WTC11 (cell line): ENCODE measurements at regions of chr1 and their contacts with region 1.

Region 1: GRCh38 chr1:24201941-24202440 is 14.9 kb upstream of the IFNLR1 start:
- DNase-seq: peak; percentile 90
- ATAC-seq: peak; percentile 75
- H3K4me3 Mint-ChIP-seq: no peak overlapping the region
- H3K27ac Mint-ChIP-seq: no peak overlapping the region
- H3K4me1 Mint-ChIP-seq: 0 out of 2 replicates have a peak, but pooled peaks cover 2% of the 10 kb centered on the region
- H3K27me3 Mint-ChIP-seq: no peaks in the 10 kb centered on the region
- CTCF ChIP-seq: peak; percentile 79

Region 2: GRCh38 chr1:23484253-23485001 is 717.6 kb before region 1 on chr1:
- CTCF ChIA-PET with region 1: no interaction called
- POLR2A ChIA-PET with region 1: no interaction called
- DNase-seq: peak; percentile 97
- ATAC-seq: peak; percentile 87
- H3K4me3 Mint-ChIP-seq: peak overlapping the region; percentile 82
- H3K27ac Mint-ChIP-seq: peak overlapping the region; percentile 96
- H3K4me1 Mint-ChIP-seq: peaks cover 44% of the 10 kb centered on the region
- H3K27me3 Mint-ChIP-seq: peaks cover 13% of the 10 kb centered on the region
- CTCF ChIP-seq: no peak

Region 3: GRCh38 chr1:24047101-24047459 is 154.9 kb before region 1 on chr1:
- CTCF ChIA-PET with region 1: no interaction called
- POLR2A ChIA-PET with region 1: no interaction called
- DNase-seq: no peak
- ATAC-seq: no peak
- H3K4me3 Mint-ChIP-seq: no peak overlapping the region
- H3K27ac Mint-ChIP-seq: 0 out of 2 replicates have a peak overlapping the region, but pooled peaks have one; percentile 60
- H3K4me1 Mint-ChIP-seq: no peaks in the 10 kb centered on the region
- H3K27me3 Mint-ChIP-seq: no peaks in the 10 kb centered on the region
- CTCF ChIP-seq: no peak

Region 4: GRCh38 chr1:24150234-24151174 is 51.5 kb before region 1 on chr1:
- CTCF ChIA-PET with region 1: interaction called, 39 read pairs
- POLR2A ChIA-PET with region 1: interaction called, 7 read pairs
- DNase-seq: peak; percentile 99
- ATAC-seq: peak; percentile 84
- H3K4me3 Mint-ChIP-seq: peak overlapping the region; percentile 63
- H3K27ac Mint-ChIP-seq: peak overlapping the region; percentile 99
- H3K4me1 Mint-ChIP-seq: peaks cover 46% of the 10 kb centered on the region
- H3K27me3 Mint-ChIP-seq: no peaks in the 10 kb centered on the region; the same call in 1 of the 2 replicates
- CTCF ChIP-seq: peak; percentile 88

Region 5: GRCh38 chr1:24253569-24253968 is 51.6 kb after region 1 on chr1:
- CTCF ChIA-PET with region 1: interaction called, 10 read pairs
- POLR2A ChIA-PET with region 1: no interaction called
- DNase-seq: peak; percentile 28
- ATAC-seq: peak; percentile 90
- H3K4me3 Mint-ChIP-seq: no peak overlapping the region
- H3K27ac Mint-ChIP-seq: no peak overlapping the region
- H3K4me1 Mint-ChIP-seq: no peaks in the 10 kb centered on the region
- H3K27me3 Mint-ChIP-seq: no peaks in the 10 kb centered on the region
- CTCF ChIP-seq: no peak

Region 6: GRCh38 chr1:24308365-24309015 is 106.5 kb after region 1 on chr1:
- CTCF ChIA-PET with region 1: interaction called, 45 read pairs
- POLR2A ChIA-PET with region 1: no interaction called
- DNase-seq: peak; percentile 49
- ATAC-seq: peak; percentile 86
- H3K4me3 Mint-ChIP-seq: no peak overlapping the region
- H3K27ac Mint-ChIP-seq: 0 out of 2 replicates have a peak overlapping the region, but pooled peaks have one; percentile 29
- H3K4me1 Mint-ChIP-seq: peaks cover 64% of the 10 kb centered on the region
- H3K27me3 Mint-ChIP-seq: no peaks in the 10 kb centered on the region
- CTCF ChIP-seq: no peak

Region 7: GRCh38 chr1:24341260-24341659 is 139.3 kb after region 1 on chr1:
- CTCF ChIA-PET with region 1: interaction called, 12 read pairs
- POLR2A ChIA-PET with region 1: no interaction called
- DNase-seq: no peak
- ATAC-seq: peak; percentile 71
- H3K4me3 Mint-ChIP-seq: no peak overlapping the region
- H3K27ac Mint-ChIP-seq: no peak overlapping the region
- H3K4me1 Mint-ChIP-seq: peaks cover 54% of the 10 kb centered on the region
- H3K27me3 Mint-ChIP-seq: no peaks in the 10 kb centered on the region; the same call in 1 of the 2 replicates
- CTCF ChIP-seq: no peak

Region 8: DNA sequence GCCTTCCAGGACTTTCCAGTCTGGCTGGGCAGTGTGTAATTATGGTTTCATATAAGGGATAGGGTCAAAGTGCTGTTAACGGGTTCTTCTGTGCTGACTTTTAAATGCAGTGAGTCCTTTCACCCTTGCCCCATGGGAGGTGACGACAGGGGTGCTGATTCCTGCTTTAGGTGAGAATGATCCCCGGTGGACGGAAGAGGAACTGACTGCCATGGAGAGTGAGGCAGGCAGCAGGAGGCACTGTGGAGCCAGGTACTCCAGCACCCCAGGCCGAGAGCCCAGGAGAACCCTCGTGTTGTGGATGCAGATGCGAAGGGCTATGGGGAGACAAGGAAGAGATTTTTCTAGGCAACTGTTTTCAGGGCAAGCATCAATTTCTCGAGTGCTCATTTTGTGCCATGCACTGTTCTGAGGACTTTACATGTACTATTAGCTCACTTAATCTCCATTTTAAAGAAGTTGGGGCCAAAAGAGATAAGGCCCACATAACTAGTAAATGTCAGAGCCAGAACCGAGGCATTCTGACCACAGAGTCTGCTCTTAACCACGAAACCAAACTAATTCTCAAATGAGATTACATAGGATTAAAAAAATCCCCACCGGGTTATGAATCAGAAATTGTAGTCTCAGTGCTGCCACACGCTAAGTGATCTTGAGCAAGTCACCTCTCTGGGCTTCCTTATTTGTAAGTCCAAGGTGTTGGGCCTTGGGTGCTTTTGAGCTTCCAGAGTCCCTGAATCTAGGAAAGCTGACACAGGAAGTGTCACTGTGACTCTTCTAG is 183.4 kb after region 1 on chr1:
- CTCF ChIA-PET with region 1: interaction called, 465 read pairs
- POLR2A ChIA-PET with region 1: interaction called, 3 read pairs
- DNase-seq: peak; percentile 75
- ATAC-seq: peak; percentile 96
- H3K4me3 Mint-ChIP-seq: no peak overlapping the region
- H3K27ac Mint-ChIP-seq: no peak overlapping the region
- H3K4me1 Mint-ChIP-seq: no peaks in the 10 kb centered on the region
- H3K27me3 Mint-ChIP-seq: no peaks in the 10 kb centered on the region; the same call in 1 of the 2 replicates
- CTCF ChIP-seq: peak; percentile 44; the same call in 1 of the 2 replicates

Region 9: DNA sequence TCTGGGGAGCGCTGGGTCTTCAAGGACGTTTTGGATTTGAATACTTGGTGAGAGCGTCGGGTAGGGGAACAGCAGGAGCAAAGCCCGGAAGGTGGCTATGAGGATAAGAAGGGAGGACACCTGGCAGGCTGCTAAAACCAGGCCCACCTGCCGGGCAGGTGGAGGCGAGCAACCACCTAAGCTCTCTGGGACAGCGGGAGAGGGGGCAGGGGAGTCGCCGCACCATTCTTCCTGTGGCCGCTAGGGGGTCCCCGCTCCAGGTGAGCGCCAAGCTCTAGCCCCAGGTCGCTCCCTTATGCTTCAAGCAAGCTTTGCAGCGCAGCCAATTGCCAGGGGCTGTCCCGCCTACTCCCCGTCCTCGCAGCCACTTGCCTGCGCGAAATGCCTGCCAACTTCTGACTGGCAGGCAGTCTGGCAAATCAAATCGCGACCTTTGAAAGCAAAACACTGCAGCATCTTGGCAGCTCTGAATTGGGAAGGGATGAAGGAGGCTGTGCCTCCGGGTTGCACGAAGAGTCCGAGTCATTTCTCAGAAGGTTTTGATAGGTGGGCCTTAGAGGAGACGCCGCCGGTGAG is 213.4 kb after region 1 on chr1 and contains the start of gene NIPAL3:
- CTCF ChIA-PET with region 1: interaction called, 22 read pairs
- POLR2A ChIA-PET with region 1: no interaction called
- DNase-seq: peak; percentile 99
- ATAC-seq: peak; percentile 94
- H3K4me3 Mint-ChIP-seq: peak within 1 kb of the TSS; percentile 93
- H3K27ac Mint-ChIP-seq: peak within 1 kb of the TSS; percentile 89
- H3K4me1 Mint-ChIP-seq: peaks cover 36% of the 10 kb centered on the region
- H3K27me3 Mint-ChIP-seq: no peaks in the 10 kb centered on the region
- CTCF ChIP-seq: peak; percentile 86
- total RNA-seq, gene NIPAL3: 11.2 to 11.3 TPM (median 11.2 TPM) in 3 replicates